Activated B cell treated with CpG ODN at 0.5 μM for 24 hours (primary cell): ENCODE measurements at regions of chr4 and their contacts with region 1.

Region 1: DNA sequence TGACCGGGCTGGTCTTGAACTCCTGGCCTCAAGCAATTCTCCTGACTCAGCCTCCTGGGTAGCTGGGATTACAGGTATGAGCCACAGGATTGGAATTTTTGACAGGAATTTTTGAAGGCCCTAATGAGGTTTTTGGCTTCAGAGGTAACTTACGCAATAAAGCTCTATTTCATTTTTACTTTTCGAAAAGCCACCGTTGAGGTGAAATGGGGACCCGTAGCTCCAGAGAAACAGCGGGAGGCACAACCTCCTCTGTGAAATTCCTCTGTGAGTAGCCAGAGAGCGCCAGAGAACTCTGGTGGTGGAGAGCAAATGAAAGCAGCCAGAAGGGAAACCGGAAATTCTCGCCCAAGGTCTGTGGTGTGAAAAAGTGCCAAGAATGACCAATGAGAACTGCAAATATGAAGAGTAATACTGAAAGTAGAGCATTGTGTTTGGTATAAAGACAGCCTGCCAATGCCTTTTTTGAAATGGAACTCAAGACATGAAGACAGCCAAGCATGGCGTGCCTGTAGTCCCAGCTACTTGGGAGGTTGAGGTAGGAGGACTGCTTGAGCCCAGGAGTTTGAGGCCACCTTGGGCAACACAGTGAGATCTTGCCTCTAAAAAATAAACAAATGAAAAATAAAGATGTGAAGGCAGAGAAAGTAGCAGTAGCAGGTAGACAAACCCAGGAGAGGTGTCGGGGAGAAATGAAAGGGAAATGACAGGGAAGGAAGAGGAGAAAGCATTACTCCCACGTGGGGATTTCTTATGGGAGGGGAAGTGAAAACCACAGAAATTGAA is 33.0 kb upstream of the TMEM131L start:
- DNase-seq: no peak
- ATAC-seq: peak; percentile 86
- H3K4me3 Mint-ChIP-seq: peak overlapping the region; percentile 80
- H3K27ac Mint-ChIP-seq: peak overlapping the region; percentile 93
- H3K4me1 Mint-ChIP-seq: peaks cover 71% of the 10 kb centered on the region
- H3K27me3 Mint-ChIP-seq: no peaks in the 10 kb centered on the region
- CTCF ChIP-seq: peak; percentile 35

Region 2: GRCh38 chr4:153362184-153362583 is 71.0 kb before region 1 on chr4:
- CTCF ChIA-PET with region 1: no interaction called
- POLR2A ChIA-PET with region 1: no interaction called
- intact Hi-C with region 1: no loop called
- DNase-seq: no peak
- ATAC-seq: no peak
- H3K4me3 Mint-ChIP-seq: no peak overlapping the region
- H3K27ac Mint-ChIP-seq: no peak overlapping the region
- H3K4me1 Mint-ChIP-seq: peaks cover 6% of the 10 kb centered on the region
- H3K27me3 Mint-ChIP-seq: no peaks in the 10 kb centered on the region
- CTCF ChIP-seq: no peak

Region 3: GRCh38 chr4:153471691-153472080 is 38.5 kb after region 1 on chr4:
- CTCF ChIA-PET with region 1: interaction called, 30 read pairs
- POLR2A ChIA-PET with region 1: interaction called, 97 read pairs
- intact Hi-C with region 1: loop called (anchors 1 kb)
- DNase-seq: no peak
- ATAC-seq: peak; percentile 35
- H3K4me3 Mint-ChIP-seq: peak overlapping the region; percentile 97
- H3K27ac Mint-ChIP-seq: peak overlapping the region; percentile 98
- H3K4me1 Mint-ChIP-seq: peaks cover 89% of the 10 kb centered on the region
- H3K27me3 Mint-ChIP-seq: no peaks in the 10 kb centered on the region
- CTCF ChIP-seq: no peak

Region 4: DNA sequence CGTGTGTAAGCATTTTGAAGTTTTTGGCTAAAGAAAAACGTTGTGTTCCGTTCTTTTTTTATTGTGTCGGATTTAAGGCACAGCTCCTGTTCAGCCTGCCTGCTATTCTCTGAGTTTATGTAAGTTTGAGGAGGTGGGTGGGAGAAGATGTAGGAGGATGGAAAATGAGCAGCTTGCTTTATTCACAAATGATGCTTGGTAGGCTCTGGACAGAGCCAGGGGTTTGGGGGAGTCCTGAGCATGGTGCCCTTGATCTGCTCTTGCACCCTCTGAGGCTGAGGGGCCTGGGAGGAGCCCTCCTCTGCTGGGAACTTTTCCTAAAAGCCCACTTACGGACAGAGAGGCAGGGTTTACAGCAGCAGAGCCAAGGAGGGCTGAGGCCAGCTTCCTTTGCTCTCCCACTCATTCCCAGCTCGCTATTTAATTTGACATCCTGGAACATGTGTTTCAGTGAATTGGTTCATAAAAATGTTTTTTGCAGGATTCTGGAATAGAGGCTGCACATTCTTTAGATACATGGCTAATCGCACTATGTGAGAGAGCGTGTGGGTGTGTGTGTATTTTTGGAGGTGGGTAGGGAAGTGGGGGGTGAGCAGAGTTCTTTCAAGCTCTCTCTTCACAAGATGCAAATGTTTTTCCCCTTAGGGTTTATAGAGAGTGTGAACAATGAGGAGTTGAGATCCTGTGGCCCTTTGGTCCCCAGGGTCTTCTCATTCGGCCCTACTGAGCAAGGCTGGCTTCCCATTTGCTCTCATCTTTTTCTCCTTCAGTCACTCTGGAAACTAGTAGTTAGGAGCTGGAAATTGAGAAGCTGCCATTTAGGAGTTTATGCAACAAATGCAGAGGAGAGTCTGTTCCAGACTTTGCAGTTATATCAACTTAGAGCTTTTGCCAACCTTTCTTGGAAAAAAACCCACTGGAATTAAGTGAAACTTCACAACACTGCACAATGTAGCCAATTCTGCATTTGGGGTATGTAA is 65.1 kb after region 1 on chr4:
- CTCF ChIA-PET with region 1: interaction called, 6 read pairs
- POLR2A ChIA-PET with region 1: interaction called, 4 read pairs
- intact Hi-C with region 1: loop called (anchors 2 kb)
- DNase-seq: no peak
- ATAC-seq: peak; percentile 79
- H3K4me3 Mint-ChIP-seq: peak overlapping the region; percentile 73
- H3K27ac Mint-ChIP-seq: peak overlapping the region; percentile 80
- H3K4me1 Mint-ChIP-seq: peaks cover 94% of the 10 kb centered on the region
- H3K27me3 Mint-ChIP-seq: no peaks in the 10 kb centered on the region
- CTCF ChIP-seq: no peak

Region 5: DNA sequence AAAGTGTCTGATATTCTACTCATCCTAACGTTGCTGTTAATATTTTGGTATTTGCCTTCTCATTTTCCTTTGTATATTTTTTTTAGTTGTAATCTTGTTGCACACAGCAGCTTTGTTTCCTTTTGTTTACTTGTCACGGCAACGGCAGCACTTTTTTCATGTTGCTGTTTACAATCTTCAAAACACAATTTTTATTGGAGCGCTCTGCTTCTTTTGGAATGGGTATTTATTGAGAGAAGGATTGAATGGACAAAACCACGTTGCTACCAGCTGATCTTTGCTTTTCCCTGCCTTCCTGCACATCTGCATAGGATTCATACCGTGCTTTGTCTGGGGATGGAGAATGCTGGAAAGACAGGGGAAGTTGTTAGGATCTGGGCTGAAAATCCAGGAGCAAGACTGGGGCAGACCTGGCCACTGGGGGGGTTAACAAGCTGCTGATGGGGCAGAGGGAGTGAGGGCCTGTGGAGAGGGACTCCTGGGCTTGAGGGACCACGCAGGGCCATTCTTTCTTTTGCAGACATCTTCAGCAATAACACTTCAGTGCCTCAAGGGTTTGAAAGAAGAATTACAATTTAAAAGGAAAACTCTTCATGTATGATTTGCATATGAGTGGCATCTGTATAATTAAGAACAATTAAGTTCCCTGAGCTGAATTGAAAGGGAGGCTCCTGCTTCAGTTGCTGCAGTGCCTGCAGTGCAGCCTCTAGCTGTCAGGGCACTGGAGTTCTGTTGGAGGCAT is 102.8 kb after region 1 on chr4:
- CTCF ChIA-PET with region 1: interaction called, 5 read pairs
- POLR2A ChIA-PET with region 1: interaction called, 3 read pairs
- intact Hi-C with region 1: loop called (anchors 1 kb)
- DNase-seq: no peak
- ATAC-seq: peak; percentile 25
- H3K4me3 Mint-ChIP-seq: no peak overlapping the region
- H3K27ac Mint-ChIP-seq: peak overlapping the region; percentile 84
- H3K4me1 Mint-ChIP-seq: peaks cover 84% of the 10 kb centered on the region
- H3K27me3 Mint-ChIP-seq: no peaks in the 10 kb centered on the region
- CTCF ChIP-seq: no peak

Region 6: DNA sequence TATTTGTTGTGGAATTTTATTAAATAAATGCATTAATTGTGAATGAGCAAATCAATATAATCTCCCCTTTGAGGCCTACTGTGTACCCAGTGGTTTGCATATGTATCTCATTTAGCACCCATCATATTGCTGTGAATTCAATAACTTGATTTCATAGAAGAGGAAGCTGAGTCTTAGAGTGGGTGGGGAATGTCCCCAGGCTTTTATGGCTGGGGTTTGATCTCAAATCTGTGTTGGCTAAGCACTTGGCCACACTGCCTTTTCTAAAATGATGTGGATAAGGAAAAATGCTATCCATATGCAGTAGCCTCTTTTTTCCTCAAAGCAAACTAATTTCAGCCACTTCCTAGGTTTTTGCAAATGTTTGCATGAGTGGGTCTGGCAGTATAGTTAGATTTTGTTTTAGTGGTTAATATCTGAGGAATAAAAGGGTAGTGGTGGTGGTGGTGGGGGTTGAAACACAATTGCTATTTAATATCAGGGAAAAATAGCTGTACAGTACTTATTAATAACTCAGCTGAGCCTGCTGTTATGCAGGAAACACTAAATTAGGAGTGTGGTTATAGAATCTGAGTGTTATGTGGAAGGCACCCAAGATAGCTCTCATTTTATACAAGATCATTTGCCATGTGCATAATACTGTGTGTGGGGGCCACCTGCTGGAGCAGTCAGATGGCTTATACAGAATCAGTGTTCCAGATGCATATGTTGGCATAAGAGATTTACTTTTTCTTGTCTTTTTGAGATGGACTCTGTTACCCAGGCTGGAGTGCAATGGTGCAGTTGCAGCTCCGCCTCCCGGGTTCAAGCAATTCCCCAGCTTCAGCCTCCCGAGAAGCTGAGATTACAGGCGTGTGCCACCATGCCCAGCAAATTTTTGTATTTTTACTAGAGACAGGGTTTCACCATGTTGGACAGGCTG is 141.0 kb after region 1 on chr4:
- CTCF ChIA-PET with region 1: interaction called, 29 read pairs
- POLR2A ChIA-PET with region 1: interaction called, 8 read pairs
- intact Hi-C with region 1: loop called (anchors 1 kb)
- DNase-seq: no peak
- ATAC-seq: peak; percentile 78
- H3K4me3 Mint-ChIP-seq: peak overlapping the region; percentile 32
- H3K27ac Mint-ChIP-seq: peak overlapping the region; percentile 82
- H3K4me1 Mint-ChIP-seq: peaks cover 77% of the 10 kb centered on the region
- H3K27me3 Mint-ChIP-seq: no peaks in the 10 kb centered on the region
- CTCF ChIP-seq: no peak

Region 7: DNA sequence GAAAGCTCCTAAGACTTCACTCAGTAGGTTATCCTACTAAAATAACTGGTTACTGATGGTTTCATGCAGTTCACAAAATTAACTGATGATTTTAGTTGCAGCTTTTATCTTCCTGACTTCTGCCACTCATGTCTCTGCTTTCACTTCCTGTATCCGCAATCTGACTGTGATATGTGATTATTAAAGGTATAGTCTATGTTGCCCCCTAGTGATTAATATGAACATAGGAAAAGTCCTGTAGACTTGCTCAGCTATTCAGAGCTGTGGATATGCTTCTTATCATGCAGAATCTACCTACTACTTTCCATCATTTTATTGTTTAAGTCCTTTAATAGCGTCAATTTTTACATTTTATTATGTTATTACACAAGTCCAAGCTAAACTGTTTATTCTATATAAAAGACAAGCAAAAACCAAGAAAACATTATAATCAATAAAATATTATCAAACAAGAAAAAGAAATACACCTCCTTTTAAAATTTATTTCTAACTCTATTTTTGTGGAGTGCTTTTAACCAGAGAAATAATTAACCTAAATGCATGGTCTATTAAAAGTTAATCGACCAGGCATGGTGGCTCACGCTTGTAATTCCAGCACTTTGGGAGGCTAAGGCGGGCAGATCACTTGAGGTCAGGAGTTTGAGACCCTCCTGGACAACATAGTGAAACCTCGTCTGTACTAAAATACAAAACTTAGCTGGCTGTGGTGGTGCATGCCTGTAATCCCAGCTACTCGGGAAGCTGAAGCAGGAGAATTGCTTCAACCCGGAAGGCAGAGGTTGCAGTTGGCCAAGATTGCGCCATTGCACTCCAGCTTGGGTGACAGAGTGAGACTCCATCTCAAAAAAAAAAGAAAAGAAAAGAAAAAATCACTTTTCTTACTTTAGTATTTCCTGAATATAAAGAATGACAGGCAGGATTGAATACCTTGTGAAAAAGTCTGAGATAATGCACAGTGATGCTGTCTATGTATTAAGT is 210.5 kb after region 1 on chr4:
- CTCF ChIA-PET with region 1: interaction called, 6 read pairs
- POLR2A ChIA-PET with region 1: no interaction called
- intact Hi-C with region 1: loop called (anchors 2 kb)
- DNase-seq: no peak
- ATAC-seq: peak; percentile 95
- H3K4me3 Mint-ChIP-seq: no peak overlapping the region
- H3K27ac Mint-ChIP-seq: no peak overlapping the region
- H3K4me1 Mint-ChIP-seq: peaks cover 10% of the 10 kb centered on the region
- H3K27me3 Mint-ChIP-seq: no peaks in the 10 kb centered on the region
- CTCF ChIP-seq: peak; percentile 36